Activated CD4-positive, alpha-beta T cell treated with anti-CD3 and anti-CD28 coated beads, Interleukin-2, amount 10 ng/mL, durations not matched to agents 24 days and 14 days (primary cell): ENCODE measurements at regions of chr19 and their contacts with region 1.

Region 1: GRCh38 chr19:50835785-50836542 is 2.6 kb upstream of the KLK15 start:
- DNase-seq: peak; percentile 96
- H3K4me3 Mint-ChIP-seq: peak overlapping the region; percentile 88
- H3K27ac Mint-ChIP-seq: peak overlapping the region; percentile 58
- H3K4me1 Mint-ChIP-seq: peaks cover 15% of the 10 kb centered on the region
- H3K27me3 Mint-ChIP-seq: peaks cover 40% of the 10 kb centered on the region

Region 2: GRCh38 chr19:50817941-50818858 is 17.8 kb before region 1 on chr19:
- intact Hi-C with region 1: loop called (anchors 1 kb)
- DNase-seq: peak; percentile 92
- H3K4me3 Mint-ChIP-seq: peak overlapping the region; percentile 77
- H3K27ac Mint-ChIP-seq: peak overlapping the region; percentile 71
- H3K4me1 Mint-ChIP-seq: peaks cover 35% of the 10 kb centered on the region
- H3K27me3 Mint-ChIP-seq: peaks cover 38% of the 10 kb centered on the region